ENCODE measurements at regions of chr14 and their contacts with region 1.

Region 1: DNA sequence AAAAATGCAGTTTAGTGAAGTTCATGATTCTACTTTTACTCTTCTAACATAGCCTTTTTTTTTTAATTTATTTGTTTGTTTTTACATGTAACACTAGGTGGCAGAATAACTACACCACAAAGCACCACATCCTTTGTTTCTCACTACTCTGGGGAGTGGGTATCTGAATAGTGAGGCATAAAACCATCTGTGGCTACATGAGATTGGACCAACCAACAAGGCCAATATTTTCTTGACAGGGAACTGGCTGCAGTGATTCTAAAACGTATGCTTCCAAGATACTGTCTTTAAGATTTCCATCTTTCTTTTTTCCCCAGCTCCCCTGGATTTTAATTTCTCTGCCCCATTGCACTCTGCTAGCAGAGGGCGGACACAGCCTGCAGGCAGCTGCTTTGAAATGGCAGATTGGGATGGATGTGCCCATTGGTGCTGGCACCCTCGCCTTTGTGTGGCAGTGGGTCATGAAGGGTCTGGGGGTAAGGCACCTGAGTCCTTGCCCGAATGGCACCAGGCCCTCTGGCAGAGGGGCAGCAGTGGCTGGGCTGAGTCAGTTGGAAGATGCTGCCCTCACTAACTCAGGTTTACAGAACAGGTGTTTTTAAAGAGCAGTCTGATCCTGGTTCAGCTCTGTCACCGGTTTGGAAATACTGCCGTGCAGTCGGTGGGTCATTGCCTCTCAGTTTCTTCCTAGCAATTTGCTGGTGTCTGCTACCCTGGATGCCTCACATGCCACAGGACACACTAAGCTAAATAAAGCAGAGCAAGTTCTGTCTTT is 429.1 kb downstream of the RAD51B start:
- DNase-seq: peak; percentile 35
- H3K4me3 ChIP-seq: no peak overlapping the region
- H3K27ac ChIP-seq: peak overlapping the region; percentile 22
- H3K4me1 ChIP-seq: peaks cover 37% of the 10 kb centered on the region
- H3K27me3 ChIP-seq: no peaks in the 10 kb centered on the region
- CTCF ChIP-seq: peak; percentile 29 to 62

Region 2: DNA sequence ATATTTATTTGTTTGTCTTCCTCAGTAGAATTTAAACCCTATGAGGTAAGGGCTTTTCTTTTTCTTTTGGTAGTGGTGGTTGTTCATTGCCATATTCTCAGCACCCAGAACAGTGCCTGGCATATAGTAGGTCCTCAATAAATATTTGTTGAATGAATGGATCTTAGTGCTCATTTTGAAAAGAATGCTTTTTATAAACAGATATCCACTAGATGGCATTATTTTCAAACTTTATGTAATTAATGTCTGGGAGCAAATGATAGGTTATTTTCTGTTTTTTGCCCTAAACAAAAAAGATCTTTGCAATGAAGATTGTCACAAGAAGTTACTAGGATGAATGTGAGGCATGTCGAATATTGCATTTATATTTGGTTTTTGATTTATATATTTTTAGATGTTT is 365.0 kb before region 1 on chr14:
- CTCF ChIA-PET with region 1: interaction called, 27 read pairs
- dilution Hi-C with region 1: no loop called
- in situ Hi-C with region 1: no loop called
- intact Hi-C with region 1: no loop called
- DNase-seq: no peak
- H3K4me3 ChIP-seq: no peak overlapping the region
- H3K27ac ChIP-seq: no peak overlapping the region
- H3K4me1 ChIP-seq: no peaks in the 10 kb centered on the region
- H3K27me3 ChIP-seq: no peaks in the 10 kb centered on the region
- CTCF ChIP-seq: peak; percentile 18 to 27

Region 3: DNA sequence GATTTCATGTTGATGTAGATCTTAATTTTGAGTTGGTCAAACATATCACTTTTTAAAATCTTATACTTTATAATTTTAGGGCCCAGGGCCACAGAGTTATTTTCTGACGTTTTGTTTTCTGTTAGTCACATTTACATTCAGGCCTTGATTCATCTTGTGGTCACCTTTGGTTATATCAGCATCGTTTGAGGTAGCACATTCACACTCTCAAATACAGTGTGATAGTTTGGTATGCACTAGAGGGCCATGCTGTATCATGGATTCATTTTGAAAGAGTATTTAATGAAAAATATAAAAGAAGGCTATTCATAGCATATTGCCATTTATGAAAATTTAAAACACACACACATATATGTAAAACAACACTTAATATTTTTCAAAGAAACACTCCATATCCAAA is 154.5 kb before region 1 on chr14:
- CTCF ChIA-PET with region 1: no interaction called
- dilution Hi-C with region 1: no loop called
- in situ Hi-C with region 1: no loop called
- intact Hi-C with region 1: loop called (anchors 2 kb)
- DNase-seq: peak; percentile 71
- H3K4me3 ChIP-seq: no peak overlapping the region
- H3K27ac ChIP-seq: no peak overlapping the region
- H3K4me1 ChIP-seq: no peaks in the 10 kb centered on the region
- H3K27me3 ChIP-seq: no peaks in the 10 kb centered on the region
- CTCF ChIP-seq: peak in 1 of 2 donors; percentile 34

Region 4: DNA sequence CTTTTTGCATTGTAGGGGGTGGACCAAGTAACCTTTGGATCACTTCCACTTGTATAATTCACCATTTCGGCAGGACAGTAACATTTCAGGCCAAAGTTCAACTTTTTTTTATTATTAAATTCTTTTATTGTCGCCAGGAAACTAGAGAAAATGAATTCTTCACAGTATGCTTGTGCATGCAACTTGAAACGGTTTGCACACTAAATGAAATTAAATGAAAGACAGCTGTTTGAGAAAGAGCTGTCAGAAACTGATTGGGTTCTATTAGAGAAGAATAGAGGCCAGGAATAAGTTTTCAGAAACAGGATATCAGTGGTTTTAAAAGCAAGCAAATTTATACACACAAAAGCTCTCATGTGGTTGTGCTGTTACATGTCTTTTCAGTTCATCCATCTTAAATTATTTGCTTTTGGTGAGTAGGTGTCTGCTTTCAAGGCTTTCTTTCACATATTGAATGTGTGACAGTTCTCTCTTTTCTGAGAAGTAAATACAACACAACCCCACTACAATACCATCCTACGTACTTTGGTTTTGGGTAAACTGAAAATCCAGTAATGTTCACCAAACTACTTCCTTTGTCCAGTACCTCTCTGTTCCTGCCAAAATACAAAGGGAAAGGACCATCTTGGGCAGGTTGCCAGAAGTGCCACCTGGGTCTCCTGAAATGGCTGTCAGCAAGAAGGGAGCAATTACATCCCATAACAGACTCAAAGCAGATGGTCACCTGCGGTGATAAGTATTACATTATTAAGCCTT is 137.4 kb before region 1 on chr14:
- CTCF ChIA-PET with region 1: no interaction called
- dilution Hi-C with region 1: no loop called
- in situ Hi-C with region 1: no loop called
- intact Hi-C with region 1: no loop called
- DNase-seq: no peak
- H3K4me3 ChIP-seq: no peak overlapping the region
- H3K27ac ChIP-seq: no peak overlapping the region
- H3K4me1 ChIP-seq: no peaks in the 10 kb centered on the region
- H3K27me3 ChIP-seq: no peaks in the 10 kb centered on the region
- CTCF ChIP-seq: no peak

Region 5: DNA sequence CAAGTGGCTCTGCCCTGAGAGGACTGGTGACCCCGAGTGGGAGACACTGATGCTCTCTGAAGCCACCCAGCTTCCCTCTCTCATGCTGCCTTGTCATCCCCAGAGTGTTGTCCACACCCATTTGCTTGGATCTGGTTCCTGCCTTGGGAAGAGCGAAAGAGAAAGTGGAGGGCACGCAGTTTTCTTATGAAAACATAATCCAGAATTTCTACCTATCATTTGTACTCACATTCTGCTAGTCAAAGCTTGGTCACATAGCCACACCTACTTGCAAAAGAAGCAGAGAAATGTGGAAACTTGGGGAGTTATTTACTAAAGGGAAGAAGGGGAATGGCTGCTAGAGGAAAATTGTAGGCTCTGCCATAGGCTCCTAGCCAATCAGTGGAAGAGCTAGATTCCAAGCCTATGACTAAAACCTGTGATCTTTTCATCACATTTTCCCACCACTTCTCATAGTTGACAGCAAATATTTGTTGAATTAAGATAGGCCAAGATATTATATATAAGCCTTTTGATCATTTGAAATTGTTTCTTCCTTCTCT is 217.9 kb after region 1 on chr14:
- CTCF ChIA-PET with region 1: no interaction called
- dilution Hi-C with region 1: no loop called
- in situ Hi-C with region 1: no loop called
- intact Hi-C with region 1: loop called (anchors 5 kb)
- DNase-seq: peak; percentile 91
- H3K4me3 ChIP-seq: no peak overlapping the region
- H3K27ac ChIP-seq: peak overlapping the region; percentile 84
- H3K4me1 ChIP-seq: peaks cover 78% of the 10 kb centered on the region
- H3K27me3 ChIP-seq: no peaks in the 10 kb centered on the region
- CTCF ChIP-seq: no peak

Region 6: DNA sequence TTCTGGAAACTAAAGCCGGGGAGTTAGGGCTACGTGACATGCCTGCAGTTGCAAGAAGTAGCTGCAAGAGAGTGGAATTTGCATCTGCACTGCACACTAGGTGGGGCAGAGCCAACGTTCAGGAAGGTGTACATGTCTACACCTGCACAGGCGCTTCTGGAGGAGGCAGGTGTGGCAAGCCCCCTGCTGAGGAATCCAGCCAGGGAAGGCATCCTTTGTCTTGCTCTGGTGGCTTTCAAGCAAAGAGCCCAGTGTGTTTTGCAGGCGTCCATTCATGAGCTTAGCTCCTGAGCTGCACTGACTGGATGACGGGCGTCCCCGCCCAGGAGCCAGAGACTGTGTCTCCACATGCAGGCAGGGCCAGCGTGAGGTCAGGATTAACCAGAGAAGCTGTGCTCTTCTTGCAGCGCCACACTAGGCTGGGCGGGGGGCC is 427.9 kb after region 1 on chr14:
- CTCF ChIA-PET with region 1: no interaction called
- dilution Hi-C with region 1: no loop called
- in situ Hi-C with region 1: loop called in 1 of 2 experiments (anchors 10 kb)
- intact Hi-C with region 1: loop called (anchors 5 kb)
- DNase-seq: peak; percentile 98
- H3K4me3 ChIP-seq: no peak overlapping the region
- H3K27ac ChIP-seq: peak overlapping the region; percentile 95
- H3K4me1 ChIP-seq: peaks cover 41% of the 10 kb centered on the region
- H3K27me3 ChIP-seq: no peaks in the 10 kb centered on the region
- CTCF ChIP-seq: peak in 1 of 2 donors; percentile 32

Region 7: DNA sequence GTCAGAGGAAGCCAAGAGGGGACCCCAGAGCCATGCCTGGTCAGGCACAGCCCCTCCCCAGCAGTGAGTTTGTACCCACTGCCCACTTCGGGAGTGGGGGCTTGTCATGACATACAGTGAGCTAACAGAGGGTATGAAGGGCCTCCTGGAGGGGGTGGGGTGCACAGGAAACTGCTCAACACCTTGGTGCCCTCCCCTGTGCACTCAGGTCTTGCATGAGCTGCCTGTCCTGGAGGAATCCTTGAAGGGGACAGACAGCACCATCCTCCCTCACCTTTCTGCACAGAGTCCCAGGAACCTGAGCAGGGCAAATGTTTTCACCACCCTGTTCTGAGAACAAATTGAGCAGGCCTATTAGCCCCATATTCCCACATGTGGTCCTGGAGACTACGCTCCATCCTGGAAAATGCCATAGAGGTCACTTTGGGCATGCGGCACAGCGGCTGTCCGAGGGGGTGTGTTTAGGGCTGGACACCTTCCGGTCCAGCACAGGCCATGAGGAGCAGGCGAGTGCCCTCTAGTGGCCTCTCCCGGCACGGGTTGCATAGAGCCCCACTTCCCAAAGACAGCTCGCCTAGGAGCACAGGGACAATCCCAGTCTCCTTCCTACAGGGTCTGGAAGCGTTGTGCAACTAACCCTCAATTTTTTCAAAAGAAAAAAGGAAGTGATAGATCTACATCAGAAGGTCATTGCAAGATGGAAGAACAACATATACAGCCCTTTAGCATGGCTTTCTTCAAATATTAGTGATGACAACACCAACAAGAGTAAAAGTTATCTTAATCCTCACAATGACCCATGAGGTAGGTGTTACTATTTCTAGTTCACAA is 576.1 kb after region 1 on chr14:
- CTCF ChIA-PET with region 1: no interaction called
- dilution Hi-C with region 1: loop called (anchors 25 kb)
- in situ Hi-C with region 1: loop called (anchors 10 kb)
- intact Hi-C with region 1: loop called (anchors 2 kb)
- DNase-seq: no peak
- H3K4me3 ChIP-seq: no peak overlapping the region
- H3K27ac ChIP-seq: no peak overlapping the region
- H3K4me1 ChIP-seq: peaks cover 9% of the 10 kb centered on the region
- H3K27me3 ChIP-seq: no peaks in the 10 kb centered on the region
- CTCF ChIP-seq: peak; percentile 85 to 97